Calu3 (cell line): ENCODE measurements at regions of chrX and their contacts with region 1.

Region 1: DNA sequence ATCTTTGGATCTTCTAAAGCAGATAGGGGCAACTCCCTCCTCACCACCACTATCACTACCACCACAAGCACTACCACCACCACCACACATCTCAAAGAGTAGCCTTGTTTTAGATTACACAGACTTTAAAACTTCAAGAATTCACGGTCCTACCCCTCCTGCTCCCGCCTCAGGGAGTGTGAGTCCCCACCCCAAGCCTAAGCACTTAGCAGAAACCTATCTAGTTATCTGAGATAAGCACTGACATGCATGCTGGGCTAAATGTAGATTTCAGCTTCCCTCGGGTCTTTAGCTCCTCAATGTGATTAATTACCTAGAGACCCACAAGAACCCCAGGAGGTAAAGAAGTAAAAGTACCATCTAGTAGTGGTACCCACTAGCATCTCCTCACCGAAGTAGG is 780 bp downstream of the AMOT start:
- DNase-seq: no peak
- H3K4me3 Mint-ChIP-seq: peak overlapping the region; percentile 92
- H3K27ac Mint-ChIP-seq: peak overlapping the region; percentile 23
- H3K4me1 Mint-ChIP-seq: peaks cover 29% of the 10 kb centered on the region
- H3K27me3 Mint-ChIP-seq: no peaks in the 10 kb centered on the region
- CTCF ChIP-seq: no peak

Region 2: DNA sequence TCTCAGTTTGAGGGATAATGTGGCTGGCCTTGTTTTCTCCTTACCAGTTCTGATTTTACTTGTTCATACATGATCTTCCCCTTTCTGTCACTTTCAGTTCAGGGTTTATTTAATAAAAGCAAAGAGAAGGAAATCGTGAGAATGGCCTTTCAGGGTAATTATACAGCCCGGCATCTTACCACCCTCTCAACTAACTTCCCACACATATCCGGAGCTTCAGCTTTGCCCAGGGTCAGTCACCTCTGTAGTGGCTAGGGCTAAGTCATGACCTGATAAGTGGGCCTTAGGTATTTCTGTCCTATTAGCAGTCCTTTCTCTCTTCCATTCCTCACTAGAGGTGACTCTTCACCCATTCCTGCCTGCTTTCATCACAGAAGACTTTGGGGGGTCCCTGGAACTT is 773.0 kb before region 1 on chrX:
- CTCF ChIA-PET with region 1: no interaction called
- intact Hi-C with region 1: no loop called
- DNase-seq: no peak
- H3K4me3 Mint-ChIP-seq: no peak overlapping the region
- H3K27ac Mint-ChIP-seq: no peak overlapping the region
- H3K4me1 Mint-ChIP-seq: no peaks in the 10 kb centered on the region
- H3K27me3 Mint-ChIP-seq: no peaks in the 10 kb centered on the region
- CTCF ChIP-seq: no peak

Region 3: GRCh38 chrX:112798736-112799135 is 41.1 kb before region 1 on chrX:
- CTCF ChIA-PET with region 1: no interaction called
- intact Hi-C with region 1: loop called (anchors 2 kb)
- DNase-seq: no peak
- H3K4me3 Mint-ChIP-seq: no peak overlapping the region
- H3K27ac Mint-ChIP-seq: no peak overlapping the region
- H3K4me1 Mint-ChIP-seq: no peaks in the 10 kb centered on the region
- H3K27me3 Mint-ChIP-seq: no peaks in the 10 kb centered on the region
- CTCF ChIP-seq: no peak

Region 4: GRCh38 chrX:113124693-113125092 is 284.8 kb after region 1 on chrX:
- CTCF ChIA-PET with region 1: no interaction called
- intact Hi-C with region 1: no loop called
- DNase-seq: no peak
- H3K4me3 Mint-ChIP-seq: no peak overlapping the region
- H3K27ac Mint-ChIP-seq: no peak overlapping the region
- H3K4me1 Mint-ChIP-seq: no peaks in the 10 kb centered on the region
- H3K27me3 Mint-ChIP-seq: no peaks in the 10 kb centered on the region
- CTCF ChIP-seq: no peak